Prostate gland (tissue), 2 donors: ENCODE measurements at regions of chr5 and their contacts with region 1.

Region 1: DNA sequence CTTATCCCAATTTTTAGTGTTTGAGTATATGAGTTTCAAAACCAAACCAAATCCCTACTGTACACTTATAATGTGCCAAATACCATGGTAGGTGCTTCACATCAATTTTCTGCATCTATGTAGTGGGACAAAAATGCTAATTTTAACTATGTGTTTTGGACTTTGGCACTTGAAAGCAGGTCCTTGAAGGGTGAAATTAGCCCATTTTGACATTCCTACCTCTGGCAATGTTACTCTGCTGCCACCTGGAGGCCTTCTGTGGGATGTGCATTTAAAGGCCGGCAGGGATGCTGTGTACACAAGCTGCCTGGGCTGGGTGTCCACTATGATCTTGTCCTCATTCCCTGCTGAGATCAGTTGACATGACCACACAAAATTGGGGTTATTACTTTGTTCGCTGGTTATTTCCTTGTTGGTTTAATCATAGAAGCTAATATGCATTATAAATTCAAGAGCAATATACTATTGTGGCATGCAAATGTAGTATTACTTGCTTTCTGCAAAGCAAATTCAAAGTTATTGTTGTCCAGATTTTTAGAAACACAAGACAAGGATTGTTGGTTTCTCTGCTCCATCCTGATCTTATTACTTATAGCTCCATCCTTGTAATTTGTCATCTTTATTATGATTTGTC is 166.8 kb downstream of the ARHGEF28 start:
- DNase-seq: peak; percentile 60
- H3K4me3 ChIP-seq: no peak overlapping the region
- H3K27ac ChIP-seq: no peak overlapping the region
- H3K4me1 ChIP-seq: no peaks in the 10 kb centered on the region
- H3K27me3 ChIP-seq: no peaks in the 10 kb centered on the region
- CTCF ChIP-seq: peak; percentile 71 to 93 (median 92)
- POLR2A ChIP-seq: no peak

Region 2: GRCh38 chr5:73471654-73472053 is 321.1 kb before region 1 on chr5:
- intact Hi-C with region 1: no loop called
- DNase-seq: no peak
- H3K4me3 ChIP-seq: no peak overlapping the region
- H3K27ac ChIP-seq: no peak overlapping the region
- H3K4me1 ChIP-seq: no peaks in the 10 kb centered on the region
- H3K27me3 ChIP-seq: no peaks in the 10 kb centered on the region
- CTCF ChIP-seq: no peak
- POLR2A ChIP-seq: no peak

Region 3: DNA sequence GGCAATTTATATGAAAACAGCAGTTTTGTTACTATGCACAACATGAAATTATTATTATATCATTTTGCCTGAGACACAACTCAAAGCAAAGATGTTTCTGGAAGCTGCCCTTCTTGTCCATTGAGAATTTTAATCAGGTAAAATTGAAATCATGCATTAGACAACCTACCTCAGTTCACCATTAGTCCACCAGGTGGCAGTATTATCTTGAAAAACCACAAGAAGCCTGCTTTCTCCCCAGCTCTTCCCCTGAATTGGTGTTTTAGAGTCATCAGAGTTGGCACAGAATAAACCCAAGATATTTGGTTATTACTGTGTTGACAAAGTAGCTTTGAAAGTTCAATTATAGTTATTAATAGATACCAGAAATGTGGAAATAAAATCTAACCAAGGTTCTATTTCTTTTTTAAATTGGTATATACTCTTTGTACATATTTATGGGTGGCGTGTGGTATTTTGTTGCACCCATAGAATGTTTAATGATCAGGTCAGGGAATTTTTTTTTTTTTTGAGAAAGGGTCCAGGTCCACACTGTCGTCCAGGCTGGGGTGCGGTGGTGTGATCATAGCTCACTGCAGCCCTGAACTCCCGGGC is 201.6 kb before region 1 on chr5:
- intact Hi-C with region 1: loop called (anchors 1 kb)
- DNase-seq: peak; percentile 82
- H3K4me3 ChIP-seq: no peak overlapping the region
- H3K27ac ChIP-seq: no peak overlapping the region
- H3K4me1 ChIP-seq: no peaks in the 10 kb centered on the region
- H3K27me3 ChIP-seq: no peaks in the 10 kb centered on the region
- CTCF ChIP-seq: peak; percentile 74 to 97 (median 92)
- POLR2A ChIP-seq: no peak

Region 4: DNA sequence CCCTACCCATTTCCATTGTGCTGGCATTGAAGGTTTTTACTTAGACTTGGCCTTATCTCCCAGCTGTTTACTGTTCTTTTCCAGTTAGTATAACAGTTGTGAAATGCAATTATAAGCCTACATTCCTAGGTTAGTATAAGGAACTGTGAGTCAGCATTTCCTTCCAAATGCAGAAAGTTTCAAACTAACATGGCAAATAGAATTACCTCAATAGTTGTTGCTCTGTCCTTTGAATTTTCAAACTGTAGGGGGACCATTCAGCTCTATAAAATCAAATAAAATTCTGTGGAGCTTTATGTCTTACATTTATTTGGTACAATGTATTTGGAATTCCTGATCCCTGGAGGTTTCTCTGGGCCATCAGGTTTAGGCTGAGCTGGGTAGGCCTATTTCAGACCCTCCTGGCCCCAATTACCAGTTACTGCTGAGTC is 119.6 kb before region 1 on chr5:
- intact Hi-C with region 1: no loop called
- DNase-seq: no peak
- H3K4me3 ChIP-seq: no peak overlapping the region
- H3K27ac ChIP-seq: peak overlapping the region in 1 of 2 donors; percentile 36
- H3K4me1 ChIP-seq: no peaks in the 10 kb centered on the region
- H3K27me3 ChIP-seq: no peaks in the 10 kb centered on the region
- CTCF ChIP-seq: no peak
- POLR2A ChIP-seq: no peak

Region 5: DNA sequence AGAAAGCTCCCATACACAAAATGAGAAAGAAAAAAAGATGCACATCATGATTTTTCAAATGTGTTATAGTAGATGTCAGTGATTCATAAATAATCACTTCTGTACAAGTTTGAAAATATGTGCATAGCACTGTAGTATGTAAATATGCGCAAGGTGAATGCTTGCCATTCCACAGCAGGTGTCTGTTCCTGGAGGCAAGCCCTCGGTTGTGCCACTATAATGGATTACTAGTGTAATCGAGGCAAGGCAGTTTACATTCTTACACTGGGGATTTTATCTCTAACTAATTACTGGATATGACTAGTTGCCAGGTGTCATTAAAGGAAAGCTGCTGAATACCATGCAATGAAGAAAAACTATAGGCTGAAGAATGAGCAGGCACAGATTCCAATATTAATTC is 73.2 kb before region 1 on chr5:
- intact Hi-C with region 1: no loop called
- DNase-seq: no peak
- H3K4me3 ChIP-seq: no peak overlapping the region
- H3K27ac ChIP-seq: no peak overlapping the region
- H3K4me1 ChIP-seq: no peaks in the 10 kb centered on the region
- H3K27me3 ChIP-seq: no peaks in the 10 kb centered on the region
- CTCF ChIP-seq: no peak
- POLR2A ChIP-seq: no peak

Region 6: GRCh38 chr5:73748510-73749400 is 44.0 kb before region 1 on chr5:
- intact Hi-C with region 1: no loop called
- DNase-seq: no peak
- H3K4me3 ChIP-seq: no peak overlapping the region
- H3K27ac ChIP-seq: no peak overlapping the region
- H3K4me1 ChIP-seq: no peaks in the 10 kb centered on the region
- H3K27me3 ChIP-seq: no peaks in the 10 kb centered on the region
- CTCF ChIP-seq: no peak
- POLR2A ChIP-seq: no peak